Heart left ventricle (tissue), 16 donors: ENCODE measurements at regions of chr13 and their contacts with region 1.

Region 1: DNA sequence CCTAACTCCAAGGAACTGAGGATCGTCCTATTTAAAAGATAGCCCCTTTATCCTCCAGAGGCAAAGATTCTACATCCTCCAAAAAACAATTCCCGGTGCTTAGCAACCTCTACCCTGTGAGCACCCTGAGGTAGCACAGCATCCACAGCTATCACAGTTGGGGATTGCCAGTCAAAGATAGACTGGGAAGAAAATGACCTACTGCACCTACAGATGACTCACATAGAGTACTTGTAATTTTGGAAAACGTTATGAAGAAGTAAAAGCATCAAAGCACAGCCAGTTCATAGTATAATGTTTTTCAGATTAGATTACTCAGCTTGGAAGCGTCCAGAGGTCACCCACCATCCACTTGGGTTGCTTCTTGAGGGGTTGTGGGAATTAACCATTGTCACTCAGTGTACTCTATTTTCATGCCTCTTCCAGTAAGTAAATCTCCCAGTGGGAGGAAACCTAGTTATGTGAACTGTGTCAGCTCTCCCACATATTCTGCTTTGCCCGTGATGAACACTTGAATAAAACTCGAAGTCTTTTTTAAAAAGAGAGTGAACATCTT is 8.9 kb upstream of the FAM124A start:
- DNase-seq: no peak
- ATAC-seq: no peak
- H3K4me3 ChIP-seq: no peak overlapping the region
- H3K27ac ChIP-seq: no peak overlapping the region
- H3K4me1 ChIP-seq: no peaks in the 10 kb centered on the region
- H3K27me3 ChIP-seq: peaks cover 0 to 24% (median 3%) of the 10 kb centered on the region in 9 donors
- CTCF ChIP-seq: no peak
- POLR2A ChIP-seq: no peak

Region 2: DNA sequence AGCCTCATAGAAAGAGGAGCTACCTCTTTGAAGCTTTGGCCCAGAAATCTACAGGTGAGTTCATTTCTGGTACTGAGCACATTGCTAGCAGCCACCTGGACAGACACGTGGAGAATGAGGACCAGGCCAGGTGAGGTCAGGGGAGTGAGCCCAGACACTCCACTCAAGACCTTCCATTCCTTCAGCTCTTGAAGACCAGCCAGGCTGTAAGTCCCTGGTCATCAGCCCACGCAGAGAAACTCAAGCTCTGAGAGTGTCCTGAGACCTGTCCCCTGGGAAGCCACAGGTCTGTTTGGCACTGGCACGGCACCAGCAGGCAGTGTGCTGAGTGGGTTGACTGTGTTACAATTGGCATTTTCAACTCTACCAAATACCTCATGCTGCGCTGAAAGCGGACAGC is 129.5 kb before region 1 on chr13:
- intact Hi-C with region 1: no loop called
- DNase-seq: no peak
- ATAC-seq: no peak
- H3K4me3 ChIP-seq: no peak overlapping the region
- H3K27ac ChIP-seq: no peak overlapping the region
- H3K4me1 ChIP-seq: no peaks in the 10 kb centered on the region
- H3K27me3 ChIP-seq: no peaks in the 10 kb centered on the region
- CTCF ChIP-seq: no peak
- POLR2A ChIP-seq: no peak

Region 3: DNA sequence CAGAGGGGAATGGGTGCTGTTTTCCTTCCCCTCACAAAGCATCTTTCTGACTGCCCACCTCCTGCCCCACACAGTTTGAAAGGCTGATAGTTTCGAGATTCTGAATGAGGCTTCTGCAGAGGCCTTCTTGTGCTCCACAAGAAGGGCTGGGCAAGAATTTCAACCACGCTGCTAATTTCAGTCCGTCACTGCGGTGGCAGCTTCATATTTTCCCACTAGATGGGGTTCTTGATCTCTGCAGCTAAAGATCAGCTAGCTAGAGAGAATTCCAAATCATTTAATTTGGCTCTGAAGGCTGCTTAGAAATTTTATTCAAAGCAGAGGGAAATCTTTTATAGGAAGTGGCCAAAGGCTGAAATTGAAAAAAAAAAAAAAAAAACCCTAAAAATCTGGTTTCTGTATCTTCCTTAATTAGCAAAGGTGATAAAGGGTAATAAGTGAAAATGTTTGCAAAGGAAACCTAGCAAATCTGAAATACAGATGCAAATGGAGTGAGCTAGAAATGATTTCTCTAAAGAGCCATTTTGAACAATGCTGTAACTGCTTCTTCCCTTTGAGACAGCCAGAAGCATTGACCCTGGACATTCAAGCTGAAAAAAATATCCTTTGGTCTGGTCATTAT is 64.2 kb before region 1 on chr13:
- intact Hi-C with region 1: loop called in 3 of 10 experiments (anchors 2 to 5 kb)
- DNase-seq: peak in 2 of 5 donors; percentile 17 to 33
- ATAC-seq: peak in 3 of 4 donors; percentile 65 to 69 (median 67)
- H3K4me3 ChIP-seq: no peak overlapping the region
- H3K27ac ChIP-seq: peak overlapping the region in 2 of 12 donors; percentile 27 to 38
- H3K4me1 ChIP-seq: peaks cover 0 to 4% (median 0%) of the 10 kb centered on the region in 12 donors
- H3K27me3 ChIP-seq: peaks cover 0 to 4% (median 0%) of the 10 kb centered on the region in 9 donors
- CTCF ChIP-seq: peak; percentile 45 to 76 (median 68)
- POLR2A ChIP-seq: no peak